ENCODE measurements at regions of chr1 and their contacts with region 1.

Region 1: GRCh38 chr1:243364866-243365265 is 109.0 kb downstream of the SDCCAG8 start:
- DNase-seq: peak; percentile 41
- H3K4me3 Mint-ChIP-seq: peak overlapping the region; percentile 27
- H3K27ac Mint-ChIP-seq: peak overlapping the region; percentile 17
- H3K4me1 Mint-ChIP-seq: peaks cover 20% of the 10 kb centered on the region
- H3K27me3 Mint-ChIP-seq: no peaks in the 10 kb centered on the region
- CTCF ChIP-seq: no peak

Region 2: DNA sequence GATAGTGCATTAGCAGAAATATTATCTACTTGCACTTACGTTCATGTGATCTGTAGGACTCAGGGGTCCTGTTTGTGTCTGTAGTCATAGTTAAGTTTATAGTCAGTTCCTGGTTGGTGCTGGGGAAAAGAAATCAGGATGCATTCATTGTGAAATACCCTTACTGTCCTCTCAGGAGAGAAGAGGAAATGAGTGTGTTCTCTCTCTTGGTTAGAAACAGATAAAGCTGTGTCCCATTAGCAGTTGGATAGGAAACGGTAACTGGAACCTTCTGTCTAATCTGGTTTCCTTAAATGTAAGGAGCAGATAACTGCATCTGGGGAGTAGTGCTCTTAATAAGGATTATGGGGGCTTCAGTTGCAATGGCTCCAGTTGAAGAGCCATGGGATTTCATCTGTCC is 100.1 kb before region 1 on chr1:
- CTCF ChIA-PET with region 1: no interaction called
- intact Hi-C with region 1: no loop called
- DNase-seq: no peak
- H3K4me3 Mint-ChIP-seq: no peak overlapping the region
- H3K27ac Mint-ChIP-seq: peak overlapping the region; percentile 46
- H3K4me1 Mint-ChIP-seq: peaks cover 73% of the 10 kb centered on the region
- H3K27me3 Mint-ChIP-seq: no peaks in the 10 kb centered on the region
- CTCF ChIP-seq: no peak

Region 3: DNA sequence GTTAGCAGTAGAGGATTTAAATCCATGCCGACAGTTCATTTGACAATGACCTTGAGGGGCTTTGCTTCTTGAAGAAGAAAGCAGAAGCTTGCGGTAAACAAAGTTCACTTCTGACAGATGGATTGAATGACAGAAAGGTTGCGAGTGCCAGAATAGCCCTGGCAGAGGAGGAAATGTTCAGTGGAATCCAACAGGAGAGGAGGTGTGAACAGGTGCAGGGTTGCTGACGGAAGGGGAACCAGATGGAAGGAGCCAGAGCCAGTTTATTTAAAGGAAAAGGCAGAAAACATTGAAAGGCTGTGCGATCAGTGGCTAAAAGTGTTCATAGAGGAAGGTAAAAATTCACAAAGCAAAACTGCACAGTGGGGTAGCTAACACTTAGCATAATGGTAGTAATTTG is 32.0 kb after region 1 on chr1:
- CTCF ChIA-PET with region 1: no interaction called
- intact Hi-C with region 1: loop called (anchors 5 kb)
- DNase-seq: peak; percentile 35
- H3K4me3 Mint-ChIP-seq: peak overlapping the region; percentile 7
- H3K27ac Mint-ChIP-seq: peak overlapping the region; percentile 41
- H3K4me1 Mint-ChIP-seq: peaks cover 54% of the 10 kb centered on the region
- H3K27me3 Mint-ChIP-seq: no peaks in the 10 kb centered on the region
- CTCF ChIP-seq: no peak